ENCODE measurements at regions of chr13 and their contacts with region 1.

Region 1: DNA sequence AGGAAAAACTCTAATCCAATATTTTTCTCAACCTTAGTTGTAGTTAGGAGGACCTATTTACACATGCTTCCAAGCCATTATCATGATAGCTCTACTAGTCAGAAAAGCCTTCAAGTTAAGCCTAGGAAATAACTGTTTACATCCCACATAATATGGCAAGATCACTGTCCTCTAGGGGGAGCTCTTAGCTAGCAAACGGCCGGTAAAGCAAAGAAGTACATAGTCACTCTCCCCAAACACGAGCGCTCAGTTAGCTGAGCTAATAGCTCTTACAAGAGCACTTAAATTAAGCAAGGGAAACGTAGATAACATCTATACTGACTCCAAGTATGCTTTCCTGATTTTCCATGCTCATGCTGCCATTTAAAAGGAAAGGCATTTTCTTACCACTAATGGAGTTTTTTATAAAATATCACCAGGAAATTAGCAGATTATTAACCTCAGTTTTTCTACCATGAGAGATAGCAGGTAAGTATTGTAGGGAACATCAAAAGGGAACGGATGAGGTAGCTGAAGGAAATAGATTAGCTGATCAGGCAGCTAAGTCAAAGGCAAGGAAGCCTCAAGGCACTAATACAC is 100.6 kb upstream of the PABPC3 start:
- DNase-seq: peak; percentile 53
- H3K4me3 ChIP-seq: no peak overlapping the region
- H3K27ac ChIP-seq: no peak overlapping the region
- H3K4me1 ChIP-seq: no peaks in the 10 kb centered on the region
- H3K27me3 ChIP-seq: peaks cover 7% of the 10 kb centered on the region
- CTCF ChIP-seq: peak; percentile 58 to 77 (median 76)
- EP300 ChIP-seq: no peak
- POLR2A ChIP-seq: no peak

Region 2: DNA sequence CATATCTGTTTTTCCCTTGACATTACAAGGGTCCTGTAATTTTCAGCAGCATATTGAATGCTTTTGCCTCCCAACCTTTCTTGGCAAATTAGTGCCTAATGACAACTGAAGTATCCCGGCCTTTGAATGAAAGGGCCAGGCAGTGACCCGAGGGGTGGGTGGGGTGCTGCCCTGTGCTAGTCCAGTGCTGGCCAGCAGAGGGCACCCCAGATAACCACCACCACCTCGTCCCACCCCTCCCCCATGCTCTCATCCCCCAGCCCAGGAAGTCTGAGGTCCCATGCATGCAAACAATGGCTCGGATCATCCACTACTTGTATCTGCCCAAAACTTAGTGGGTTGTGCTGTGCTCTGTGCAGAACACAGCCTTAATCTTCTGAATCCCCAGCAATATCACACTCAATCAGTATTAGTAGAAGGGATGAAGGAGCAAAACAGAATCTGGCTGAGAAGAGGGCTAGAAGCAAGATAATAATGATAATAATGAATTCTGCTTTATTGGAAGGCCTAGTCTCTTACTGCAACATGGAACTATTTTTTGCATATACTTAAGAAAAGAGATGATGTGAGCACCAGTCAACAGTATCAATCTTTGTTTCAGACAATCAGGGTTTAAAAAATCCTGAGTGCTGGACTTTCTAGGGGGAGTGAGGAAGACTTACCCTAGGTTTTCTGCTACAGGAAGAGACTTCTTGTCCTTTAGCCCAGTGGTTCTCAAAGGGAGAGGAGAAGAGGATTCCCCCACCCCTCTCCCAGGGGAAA is 311.3 kb before region 1 on chr13:
- in situ Hi-C with region 1: loop called in 1 of 4 experiments (anchors 25 kb)
- intact Hi-C with region 1: no loop called
- DNase-seq: peak; percentile 72
- H3K4me3 ChIP-seq: no peak overlapping the region
- H3K27ac ChIP-seq: no peak overlapping the region
- H3K4me1 ChIP-seq: peaks cover 0 to 15% (median 11%) of the 10 kb centered on the region in 4 donors
- H3K27me3 ChIP-seq: peaks cover 31% of the 10 kb centered on the region
- CTCF ChIP-seq: peak; percentile 67 to 87 (median 78)
- EP300 ChIP-seq: no peak
- POLR2A ChIP-seq: no peak

Measured in transverse colon (tissue), 4 donors.